GM12878 (cell line): ENCODE measurements at regions of chr12 and their contacts with region 1.

Region 1: DNA sequence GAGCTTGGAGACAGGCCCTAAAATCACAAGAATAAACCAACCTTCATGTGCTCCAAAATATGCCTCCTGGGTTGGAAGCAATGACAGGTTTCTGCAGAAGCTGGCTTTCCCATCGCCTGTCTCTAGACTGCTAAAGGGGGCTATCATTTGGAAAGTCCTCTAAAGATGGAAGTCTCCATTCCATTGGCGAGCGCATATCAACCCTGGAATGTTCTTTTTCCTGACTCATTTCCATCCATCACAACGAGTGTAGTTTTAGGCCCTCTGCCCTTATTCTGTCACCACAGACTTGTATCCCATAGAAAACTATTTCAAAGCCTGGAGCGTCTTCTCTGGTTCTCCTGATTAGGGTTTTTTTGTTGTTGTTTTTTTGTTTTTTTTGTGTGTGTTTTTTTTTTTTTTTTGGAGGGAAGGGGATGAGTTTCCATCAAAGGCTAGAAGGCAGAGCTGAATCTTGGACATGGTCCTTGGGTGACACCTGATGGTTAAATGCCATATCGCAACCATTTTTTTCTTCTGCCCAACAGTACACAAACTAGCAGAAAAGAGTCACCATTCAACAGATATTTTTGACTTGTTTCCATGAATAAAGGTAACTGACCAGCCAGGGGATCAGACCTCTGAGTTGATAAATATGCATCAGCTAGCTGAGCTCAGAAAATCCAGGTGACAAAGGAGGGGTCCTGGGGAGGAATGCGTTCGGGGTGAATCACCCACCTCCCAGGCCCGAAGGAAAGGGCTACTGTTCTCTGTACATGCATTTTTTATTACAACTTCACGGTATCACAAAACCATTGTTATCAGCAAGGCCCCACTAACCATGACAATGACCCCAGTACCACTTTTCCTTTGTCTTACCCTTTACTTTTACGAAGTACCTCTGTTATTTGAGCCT is 40.5 kb downstream of the KCNA5 start:
- DNase-seq: peak; percentile 23
- ATAC-seq: peak; percentile 68
- H3K4me3 ChIP-seq: no peak overlapping the region
- H3K27ac ChIP-seq: no peak overlapping the region
- H3K4me1 ChIP-seq: no peaks in the 10 kb centered on the region
- H3K27me3 ChIP-seq: peaks cover 0 to 3% of the 10 kb centered on the region in 2 experiments; a peak in 2 of 4 replicates
- CTCF ChIP-seq: peak; percentile 69 to 79 (median 70)
- EP300 ChIP-seq: no peak
- POLR2A ChIP-seq: no peak
- RAD21 ChIP-seq: peak; percentile 89

Region 2: DNA sequence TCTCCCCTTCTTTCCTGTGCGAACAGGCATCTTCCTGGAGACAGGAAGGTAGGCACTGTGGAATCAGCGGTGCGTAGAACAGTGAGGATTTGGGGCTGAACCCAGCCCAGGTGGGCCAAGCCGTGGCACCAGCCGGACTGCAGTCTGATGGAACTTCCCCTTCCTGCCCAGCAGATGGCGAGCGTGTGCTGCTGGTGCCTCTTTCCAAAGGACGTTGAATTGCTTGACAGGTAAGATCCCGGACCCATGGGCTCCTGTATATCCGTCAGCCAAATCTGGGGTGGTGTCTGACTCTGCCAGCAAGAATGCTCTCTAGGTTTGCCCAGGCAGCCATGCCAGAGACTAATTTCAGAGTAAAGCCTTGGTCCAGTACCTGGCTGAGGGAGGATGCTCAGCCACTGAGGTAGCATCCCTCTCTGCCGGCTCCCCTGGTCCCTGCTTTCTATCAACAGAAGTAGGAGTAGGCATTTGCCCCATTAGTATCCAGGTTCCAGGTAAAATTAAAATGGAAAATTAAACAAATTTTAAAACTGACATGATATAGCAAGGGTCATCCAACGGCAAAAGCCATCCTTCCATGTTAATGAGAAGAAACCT is 61.6 kb before region 1 on chr12:
- CTCF ChIA-PET with region 1: interaction called, 48 read pairs
- POLR2A ChIA-PET with region 1: interaction called, 3 read pairs
- RAD21 ChIA-PET with region 1: interaction called, 9 read pairs
- SMC1A ChIA-PET with region 1: interaction called, 16 read pairs
- in situ Hi-C with region 1: loop called (anchors 5 kb)
- intact Hi-C with region 1: loop called (anchors 1 kb)
- DNase-seq: no peak
- ATAC-seq: peak; percentile 91
- H3K4me3 ChIP-seq: no peak overlapping the region
- H3K27ac ChIP-seq: no peak overlapping the region
- H3K4me1 ChIP-seq: no peaks in the 10 kb centered on the region
- H3K27me3 ChIP-seq: no peaks in the 10 kb centered on the region; a peak in 3 of 4 replicates
- CTCF ChIP-seq: peak; percentile 93 to 97 (median 95)
- EP300 ChIP-seq: no peak
- POLR2A ChIP-seq: no peak
- RAD21 ChIP-seq: peak; percentile 96

Region 3: DNA sequence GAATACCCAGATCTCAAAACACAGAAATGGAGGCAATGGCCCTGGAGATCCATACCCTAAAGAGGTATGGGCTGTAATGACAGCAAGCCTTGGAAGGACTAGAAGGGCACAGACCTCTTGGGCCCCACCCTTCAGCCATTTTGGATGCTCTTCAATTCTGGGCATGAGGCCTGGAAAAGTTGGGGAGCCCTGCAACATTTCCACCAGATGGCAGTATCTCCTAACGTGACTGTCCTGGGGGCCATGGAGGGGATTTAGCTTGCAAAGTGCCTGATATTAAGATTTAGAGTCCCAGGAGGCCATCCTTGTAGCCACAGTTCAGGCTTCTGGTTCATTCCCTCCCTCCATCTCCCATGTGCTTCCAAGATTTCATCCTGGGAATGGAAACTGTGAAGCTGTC is 10.3 kb before region 1 on chr12:
- CTCF ChIA-PET with region 1: interaction called, 15 read pairs
- POLR2A ChIA-PET with region 1: no interaction called
- RAD21 ChIA-PET with region 1: no interaction called
- SMC1A ChIA-PET with region 1: interaction called, 3 read pairs
- in situ Hi-C with region 1: no loop called
- intact Hi-C with region 1: no loop called
- DNase-seq: no peak
- ATAC-seq: peak; percentile 45; the same call in 1 of the 3 replicates
- H3K4me3 ChIP-seq: no peak overlapping the region
- H3K27ac ChIP-seq: no peak overlapping the region
- H3K4me1 ChIP-seq: no peaks in the 10 kb centered on the region
- H3K27me3 ChIP-seq: peaks cover 0 to 3% of the 10 kb centered on the region in 2 experiments; a peak in 1 of 4 replicates
- CTCF ChIP-seq: peak; percentile 23 to 33 (median 27); a peak in 3 of 6 replicates
- EP300 ChIP-seq: no peak
- POLR2A ChIP-seq: no peak
- RAD21 ChIP-seq: peak; percentile 32

Region 4: DNA sequence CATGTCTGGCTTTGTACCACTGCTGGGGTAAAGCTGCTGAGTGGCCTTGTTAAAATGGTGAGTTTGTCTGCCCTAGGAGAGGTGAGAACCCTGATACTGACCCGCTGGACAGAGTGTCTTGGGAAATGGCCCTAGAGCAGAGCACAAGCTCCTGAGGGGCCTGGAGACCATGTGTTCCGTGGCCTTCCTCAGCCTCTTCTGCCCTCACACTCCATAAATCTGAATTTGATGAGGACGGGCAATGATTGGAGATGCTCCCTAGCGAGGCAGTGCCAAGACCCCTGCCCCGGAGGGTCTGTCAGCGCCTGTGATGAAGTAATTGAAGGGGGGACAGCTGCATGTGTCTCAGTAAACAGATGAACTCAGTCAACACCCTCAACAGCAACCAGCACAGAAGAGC is 13.6 kb after region 1 on chr12:
- CTCF ChIA-PET with region 1: no interaction called
- POLR2A ChIA-PET with region 1: no interaction called
- RAD21 ChIA-PET with region 1: no interaction called
- SMC1A ChIA-PET with region 1: no interaction called
- in situ Hi-C with region 1: no loop called
- intact Hi-C with region 1: no loop called
- DNase-seq: no peak
- ATAC-seq: no peak
- H3K4me3 ChIP-seq: no peak overlapping the region
- H3K27ac ChIP-seq: no peak overlapping the region
- H3K4me1 ChIP-seq: no peaks in the 10 kb centered on the region
- H3K27me3 ChIP-seq: no peaks in the 10 kb centered on the region; a peak in 1 of 4 replicates
- CTCF ChIP-seq: no peak
- EP300 ChIP-seq: no peak
- POLR2A ChIP-seq: no peak
- RAD21 ChIP-seq: no peak

Region 5: DNA sequence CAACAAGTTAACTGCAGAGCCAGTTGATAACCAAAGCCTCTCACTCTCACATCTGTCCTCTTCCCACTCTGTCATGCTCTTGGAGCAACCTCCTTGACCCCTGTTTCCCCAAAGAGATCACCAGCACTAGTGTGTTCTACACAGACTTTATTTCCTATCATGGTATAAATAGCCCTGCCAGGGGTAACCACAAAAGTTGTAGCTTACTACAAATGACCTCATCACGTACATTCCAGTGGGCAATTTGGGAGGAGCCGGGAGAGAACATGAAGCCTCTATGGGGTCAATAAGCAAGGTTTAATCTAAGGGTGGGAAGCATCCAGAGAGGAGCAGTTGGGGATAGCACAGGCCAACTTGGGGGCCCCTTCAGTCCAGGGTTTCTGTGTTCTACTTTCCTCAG is 146.0 kb after region 1 on chr12:
- CTCF ChIA-PET with region 1: no interaction called
- POLR2A ChIA-PET with region 1: no interaction called
- RAD21 ChIA-PET with region 1: no interaction called
- SMC1A ChIA-PET with region 1: no interaction called
- in situ Hi-C with region 1: no loop called
- intact Hi-C with region 1: no loop called
- DNase-seq: no peak
- ATAC-seq: no peak
- H3K4me3 ChIP-seq: no peak overlapping the region
- H3K27ac ChIP-seq: no peak overlapping the region
- H3K4me1 ChIP-seq: no peaks in the 10 kb centered on the region
- H3K27me3 ChIP-seq: peaks cover 2 to 5% of the 10 kb centered on the region in 2 experiments
- CTCF ChIP-seq: no peak
- EP300 ChIP-seq: no peak
- POLR2A ChIP-seq: no peak
- RAD21 ChIP-seq: no peak